ENCODE measurements at regions of chr6 and their contacts with region 1.

Region 1: GRCh38 chr6:28940858-28941680 is 17.3 kb upstream of the TRIM27 start:
- DNase-seq: peak; percentile 62 to 94 (median 68)
- ATAC-seq: peak; percentile 82
- H3K4me3 ChIP-seq: peak overlapping the region; percentile 64
- H3K27ac ChIP-seq: peak overlapping the region; percentile 91
- H3K4me1 ChIP-seq: peaks cover 3 to 20% of the 10 kb centered on the region in 2 experiments; a peak in 3 of 5 replicates
- H3K27me3 ChIP-seq: no peaks in the 10 kb centered on the region
- CTCF ChIP-seq: no peak; a peak in 2 of 6 replicates
- EP300 ChIP-seq: peak; percentile 88
- POLR2A ChIP-seq: no peak
- RAD21 ChIP-seq: peak in 1 of 2 experiments; percentile 52; a peak in 2 of 4 replicates

Region 2: DNA sequence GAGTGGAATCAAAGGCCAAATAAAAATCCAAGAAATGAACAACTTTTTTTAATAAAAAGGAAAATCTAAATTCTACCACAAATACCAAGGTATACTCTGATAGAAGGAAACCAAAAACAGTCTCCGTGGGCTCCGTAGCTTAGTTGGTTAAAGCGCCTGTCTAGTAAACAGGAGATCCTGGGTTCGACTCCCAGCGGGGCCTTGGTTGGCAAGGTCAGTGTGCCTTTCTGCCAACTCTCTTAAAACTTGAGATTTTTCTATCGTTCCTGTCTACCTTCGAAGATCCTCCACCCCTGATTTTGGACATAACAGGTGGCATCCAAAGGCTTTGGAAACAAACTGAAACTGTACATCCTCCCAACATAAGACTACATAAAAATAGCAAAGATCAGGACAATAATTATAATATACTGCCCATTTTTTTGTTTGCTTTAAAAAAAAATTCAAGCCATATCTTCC is 215.2 kb before region 1 on chr6:
- CTCF ChIA-PET with region 1: interaction called, 3 read pairs
- POLR2A ChIA-PET with region 1: no interaction called
- in situ Hi-C with region 1: no loop called
- intact Hi-C with region 1: loop called (anchors 5 kb)
- DNase-seq: peak; percentile 51 to 93 (median 70)
- ATAC-seq: peak; percentile 50
- H3K4me3 ChIP-seq: peak overlapping the region; percentile 63
- H3K27ac ChIP-seq: peak overlapping the region; percentile 80; the same call in 2 of the 3 replicates
- H3K4me1 ChIP-seq: peaks cover 7 to 10% of the 10 kb centered on the region in 2 experiments; a peak in 4 of 5 replicates
- H3K27me3 ChIP-seq: no peaks in the 10 kb centered on the region
- CTCF ChIP-seq: no peak
- EP300 ChIP-seq: peak; percentile 65
- POLR2A ChIP-seq: no peak
- RAD21 ChIP-seq: 0 out of 4 replicates have a peak, but pooled peaks of 1 of the 2 experiments have one; percentile 9

Region 3: DNA sequence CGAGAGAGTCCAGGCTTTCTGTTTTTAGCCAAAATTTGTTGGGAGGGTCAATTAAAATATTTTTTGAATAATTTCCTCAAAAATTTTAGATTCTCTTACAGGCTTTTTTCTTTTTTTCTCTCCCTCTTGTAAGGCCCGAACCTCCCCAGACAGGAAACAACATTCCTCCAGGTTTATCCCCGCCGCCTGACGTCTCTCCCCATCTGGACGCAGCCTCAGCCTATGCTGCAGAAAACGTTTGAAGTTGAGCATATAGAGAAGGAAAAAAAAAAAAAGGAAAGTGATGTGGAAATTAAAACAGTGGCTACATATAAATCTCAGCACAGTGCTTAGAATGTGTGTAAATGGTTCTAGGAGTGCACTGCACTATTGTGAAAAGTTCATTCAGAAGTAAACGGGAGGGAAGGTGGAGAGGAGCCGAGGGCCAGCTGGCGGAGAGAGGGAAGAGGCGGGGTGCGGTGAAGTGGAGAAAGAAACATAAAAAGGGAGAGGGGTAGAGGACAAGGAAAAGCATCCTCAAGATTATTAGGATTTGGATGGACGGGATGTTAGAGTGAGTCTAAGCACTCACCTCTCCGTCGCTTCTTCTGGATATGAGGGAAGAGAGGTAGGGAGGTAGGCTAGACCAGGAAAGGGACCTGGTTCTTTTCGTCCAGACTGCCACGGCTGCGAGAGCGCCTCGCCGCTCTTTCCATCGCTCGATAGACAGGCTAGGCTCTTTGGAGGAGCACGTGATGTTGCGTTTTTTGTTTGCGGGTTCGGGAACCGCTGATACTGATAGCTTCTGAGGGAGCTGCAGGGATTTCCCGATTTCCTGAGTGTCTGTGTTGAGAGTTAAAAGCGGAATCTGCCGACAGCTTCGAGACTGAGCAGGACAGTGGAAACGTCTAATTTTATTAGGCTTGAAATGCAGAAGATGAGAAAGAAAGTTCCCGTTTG is 116.0 kb before region 1 on chr6:
- CTCF ChIA-PET with region 1: no interaction called
- POLR2A ChIA-PET with region 1: no interaction called
- in situ Hi-C with region 1: no loop called
- intact Hi-C with region 1: no loop called
- DNase-seq: peak in 2 of 4 experiments; percentile 26 to 47
- ATAC-seq: peak; percentile 80
- H3K4me3 ChIP-seq: peak overlapping the region; percentile 27
- H3K27ac ChIP-seq: no peak overlapping the region
- H3K4me1 ChIP-seq: peaks cover 0 to 13% of the 10 kb centered on the region in 2 experiments; a peak in 2 of 5 replicates
- H3K27me3 ChIP-seq: peaks cover 0 to 10% of the 10 kb centered on the region in 2 experiments; a peak in 2 of 5 replicates
- CTCF ChIP-seq: no peak
- EP300 ChIP-seq: no peak
- POLR2A ChIP-seq: no peak
- RAD21 ChIP-seq: no peak

Region 4: DNA sequence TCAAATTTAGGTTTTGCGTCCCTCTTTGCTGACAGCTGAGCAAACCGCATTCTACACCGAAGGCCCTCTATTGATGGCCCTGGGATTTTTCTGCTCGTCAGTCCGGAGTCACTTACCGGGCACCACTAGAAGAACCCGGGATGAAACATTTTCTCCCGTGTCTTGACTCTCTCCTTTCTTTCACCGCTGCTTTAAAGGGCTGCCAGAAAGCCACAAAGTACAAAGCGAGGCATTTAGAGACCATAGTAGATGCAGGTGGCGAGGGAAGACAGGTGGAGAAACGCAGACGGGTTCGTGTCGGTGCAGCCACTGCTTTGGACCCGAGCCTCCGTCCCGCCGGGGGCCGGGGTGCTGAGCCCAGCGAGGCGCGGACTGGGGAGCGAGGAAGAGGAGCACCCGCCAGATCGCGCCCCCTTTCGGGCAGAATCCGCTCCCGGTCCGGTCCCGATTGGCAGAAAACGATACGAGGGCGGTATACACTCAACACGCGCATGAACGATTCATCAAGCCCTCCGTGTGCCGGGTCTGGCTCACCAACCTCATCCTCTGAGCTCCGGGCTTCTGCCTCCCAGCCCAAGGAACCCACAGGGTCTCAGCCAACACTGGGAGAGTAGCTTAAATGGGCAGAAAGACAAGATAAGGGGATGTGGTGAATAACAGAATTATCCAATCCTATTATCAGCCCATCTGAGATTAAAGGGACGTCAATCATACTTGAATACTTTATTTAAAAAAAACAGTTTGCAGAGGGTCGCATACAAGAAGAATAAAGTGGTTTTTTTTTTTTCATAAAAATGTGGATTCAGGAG is 102.2 kb before region 1 on chr6:
- CTCF ChIA-PET with region 1: interaction called, 20 read pairs
- POLR2A ChIA-PET with region 1: interaction called, 5 read pairs
- in situ Hi-C with region 1: no loop called
- intact Hi-C with region 1: loop called (anchors 2 kb)
- DNase-seq: peak; percentile 90 to 96 (median 92)
- ATAC-seq: peak; percentile 94
- H3K4me3 ChIP-seq: peak overlapping the region; percentile 74
- H3K27ac ChIP-seq: peak overlapping the region; percentile 86
- H3K4me1 ChIP-seq: peaks cover 0 to 8% of the 10 kb centered on the region in 2 experiments; a peak in 2 of 5 replicates
- H3K27me3 ChIP-seq: no peaks in the 10 kb centered on the region
- CTCF ChIP-seq: peak; percentile 84 to 93 (median 88)
- EP300 ChIP-seq: no peak; the same call in 1 of the 2 replicates
- POLR2A ChIP-seq: peak; percentile 80
- RAD21 ChIP-seq: peak; percentile 69 to 73

Region 5: GRCh38 chr6:28880894-28881780 is 59.9 kb before region 1 on chr6:
- CTCF ChIA-PET with region 1: no interaction called
- POLR2A ChIA-PET with region 1: no interaction called
- in situ Hi-C with region 1: no loop called
- intact Hi-C with region 1: loop called (anchors 2 kb)
- DNase-seq: peak; percentile 72 to 93 (median 74)
- ATAC-seq: peak; percentile 67
- H3K4me3 ChIP-seq: peak overlapping the region; percentile 63
- H3K27ac ChIP-seq: peak overlapping the region; percentile 66
- H3K4me1 ChIP-seq: peaks cover 3% of the 10 kb centered on the region in 2 experiments; a peak in 2 of 5 replicates
- H3K27me3 ChIP-seq: no peaks in the 10 kb centered on the region
- CTCF ChIP-seq: peak in 1 of 3 experiments; percentile 4; a peak in 1 of 6 replicates
- EP300 ChIP-seq: peak; percentile 78
- POLR2A ChIP-seq: no peak
- RAD21 ChIP-seq: no peak

Region 6: DNA sequence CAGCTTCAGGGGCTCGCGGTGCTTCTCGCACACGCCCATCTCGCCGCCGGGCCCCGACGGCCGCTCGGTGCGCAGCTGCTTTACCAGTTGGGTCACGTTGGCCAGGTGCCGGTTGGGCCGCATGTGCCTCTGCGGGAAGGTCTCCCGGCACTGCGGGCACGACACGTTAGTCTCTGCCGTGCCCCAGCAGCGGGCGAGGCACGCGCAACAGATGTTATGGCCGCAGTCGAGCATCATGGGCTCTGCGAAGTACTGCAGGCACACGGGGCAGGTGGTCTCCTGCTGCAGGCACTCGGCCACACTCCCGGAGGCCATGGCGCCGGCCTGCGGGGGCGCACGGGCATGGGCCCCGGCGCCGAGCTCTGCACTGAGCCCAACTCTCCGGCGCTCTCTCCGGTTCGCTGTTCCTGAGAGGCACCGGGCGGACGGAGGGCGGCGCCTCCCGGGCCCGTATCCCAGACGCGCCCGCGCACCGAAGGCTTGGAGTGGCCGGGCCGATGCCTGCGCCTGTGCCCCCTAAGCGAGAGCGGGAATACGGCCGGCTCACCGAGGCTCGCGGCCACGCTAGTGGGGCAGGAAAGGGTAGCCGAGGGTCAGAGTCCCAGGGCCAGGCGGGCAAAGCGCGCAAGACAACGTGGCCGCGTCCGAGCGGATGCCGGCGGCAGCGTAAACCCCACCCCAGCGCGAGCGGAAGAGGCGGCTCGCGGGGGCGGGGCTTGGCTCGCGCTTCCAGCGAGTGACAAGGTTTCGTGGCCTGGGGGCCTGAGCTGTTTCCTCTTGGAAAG is 17.6 kb before region 1 on chr6 and contains the start of gene TRIM27:
- CTCF ChIA-PET with region 1: no interaction called
- POLR2A ChIA-PET with region 1: interaction called, 68 read pairs
- in situ Hi-C with region 1: no loop called
- intact Hi-C with region 1: loop called (anchors 2 kb)
- DNase-seq: peak; percentile 91 to 97 (median 92)
- ATAC-seq: peak; percentile 91
- H3K4me3 ChIP-seq: peak within 1 kb of the TSS; percentile 95
- H3K27ac ChIP-seq: peak within 1 kb of the TSS; percentile 97
- H3K4me1 ChIP-seq: peaks cover 26 to 32% of the 10 kb centered on the region in 2 experiments
- H3K27me3 ChIP-seq: no peaks in the 10 kb centered on the region
- CTCF ChIP-seq: no peak
- EP300 ChIP-seq: no peak
- POLR2A ChIP-seq: peak; percentile 98
- RAD21 ChIP-seq: no peak
- polyA plus RNA-seq, gene TRIM27: 37.7 to 49.6 TPM

Region 7: DNA sequence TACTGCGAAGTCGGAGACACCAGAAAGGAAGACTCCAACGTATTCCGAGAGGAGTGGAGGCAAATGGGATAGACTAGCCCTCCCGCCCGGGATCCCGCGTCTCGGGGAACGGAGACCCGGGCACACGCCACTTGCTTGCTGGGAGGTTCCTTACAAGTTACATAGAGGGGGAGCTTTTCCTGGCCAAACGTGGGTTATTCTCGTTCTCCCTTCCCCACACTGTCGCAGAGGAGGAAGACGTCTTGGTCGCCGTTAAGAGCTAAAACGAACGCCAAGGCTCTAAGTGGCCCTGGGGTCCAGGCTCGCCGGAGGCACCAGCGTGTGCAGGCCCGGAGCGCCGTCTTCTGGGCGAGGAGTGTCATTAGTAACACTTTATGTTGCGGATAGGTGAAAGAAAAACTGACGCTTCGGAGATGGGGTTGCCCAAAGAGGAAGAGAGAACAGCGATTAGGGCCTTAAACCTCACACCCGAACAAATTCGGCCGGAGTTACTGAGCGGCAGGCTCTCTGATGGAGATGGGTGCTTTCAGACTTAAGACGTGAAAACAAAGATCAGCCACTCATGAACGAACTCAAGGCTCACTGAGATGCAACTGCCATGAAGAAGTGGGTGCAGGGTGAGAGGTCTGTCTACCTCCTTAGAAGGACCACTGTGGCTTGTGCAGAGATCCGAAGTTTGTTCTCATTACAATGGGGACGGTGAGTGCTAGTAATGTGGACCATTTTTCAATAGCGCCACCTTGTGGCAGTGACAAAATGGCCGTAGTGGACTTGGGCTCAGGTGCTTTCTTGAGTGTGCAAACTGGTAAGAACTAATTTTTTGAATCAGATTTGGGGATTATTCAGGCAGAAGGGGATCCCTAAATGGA is 75.7 kb after region 1 on chr6:
- CTCF ChIA-PET with region 1: interaction called, 11 read pairs
- POLR2A ChIA-PET with region 1: interaction called, 4 read pairs
- in situ Hi-C with region 1: no loop called
- intact Hi-C with region 1: loop called (anchors 1 kb)
- DNase-seq: peak; percentile 73 to 96 (median 78)
- ATAC-seq: peak; percentile 96
- H3K4me3 ChIP-seq: peak overlapping the region; percentile 56
- H3K27ac ChIP-seq: peak overlapping the region; percentile 69
- H3K4me1 ChIP-seq: peaks cover 3 to 7% of the 10 kb centered on the region in 2 experiments; a peak in 3 of 5 replicates
- H3K27me3 ChIP-seq: no peaks in the 10 kb centered on the region
- CTCF ChIP-seq: peak; percentile 90 to 93 (median 93)
- EP300 ChIP-seq: no peak
- POLR2A ChIP-seq: no peak
- RAD21 ChIP-seq: peak; percentile 88 to 93

Measured in K562 (cell line).